ENCODE measurements at regions of chr4 and their contacts with region 1.

Region 1: GRCh38 chr4:77782102-77782835 is 36.9 kb downstream of the CNOT6L start:
- DNase-seq: no peak
- H3K4me3 ChIP-seq: no peak overlapping the region
- H3K27ac ChIP-seq: no peak overlapping the region
- H3K4me1 ChIP-seq: peaks cover 14% of the 10 kb centered on the region
- CTCF ChIP-seq: no peak

Region 2: DNA sequence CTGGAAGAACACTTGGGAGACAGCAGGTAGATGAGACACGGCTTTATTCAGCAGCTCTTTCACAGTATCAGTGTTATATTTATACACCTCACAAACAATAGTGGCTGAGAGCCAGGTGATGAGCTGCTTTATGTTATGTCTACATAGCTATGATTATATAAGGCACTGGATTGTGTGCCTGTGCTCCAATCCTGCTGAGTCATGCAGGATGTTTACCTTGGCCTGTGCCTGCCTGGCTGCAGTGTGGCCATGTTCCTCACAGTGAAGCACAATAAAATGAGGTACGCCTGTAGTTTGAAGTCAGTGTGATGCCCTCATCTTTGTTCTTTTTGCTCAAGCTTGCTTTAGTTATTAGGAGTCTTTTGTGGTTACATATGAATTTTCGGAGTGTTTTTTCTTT is 145.4 kb before region 1 on chr4:
- CTCF ChIA-PET with region 1: no interaction called
- POLR2A ChIA-PET with region 1: interaction called, 14 read pairs
- intact Hi-C with region 1: no loop called
- DNase-seq: peak; percentile 34
- H3K4me3 ChIP-seq: no peak overlapping the region
- H3K27ac ChIP-seq: no peak overlapping the region
- H3K4me1 ChIP-seq: no peaks in the 10 kb centered on the region
- CTCF ChIP-seq: no peak

Region 3: GRCh38 chr4:77795326-77795725 is 13.1 kb after region 1 on chr4:
- CTCF ChIA-PET with region 1: no interaction called
- POLR2A ChIA-PET with region 1: interaction called, 40 read pairs
- intact Hi-C with region 1: no loop called
- DNase-seq: no peak
- H3K4me3 ChIP-seq: no peak overlapping the region
- H3K27ac ChIP-seq: no peak overlapping the region
- H3K4me1 ChIP-seq: no peaks in the 10 kb centered on the region
- CTCF ChIP-seq: no peak

Measured in OCI-LY7 (cell line).